ENCODE measurements at regions of chr7 and their contacts with region 1.

Region 1: GRCh38 chr7:150420987-150421674 is 29.3 kb upstream of the GIMAP8 start:
- DNase-seq: peak; percentile 83 to 93 (median 87)
- ATAC-seq: peak; percentile 94 to 96
- H3K4me3 ChIP-seq: no peak overlapping the region
- H3K27ac ChIP-seq: no peak overlapping the region
- H3K4me1 ChIP-seq: no peaks in the 10 kb centered on the region
- H3K27me3 ChIP-seq: no peaks in the 10 kb centered on the region

Region 2: DNA sequence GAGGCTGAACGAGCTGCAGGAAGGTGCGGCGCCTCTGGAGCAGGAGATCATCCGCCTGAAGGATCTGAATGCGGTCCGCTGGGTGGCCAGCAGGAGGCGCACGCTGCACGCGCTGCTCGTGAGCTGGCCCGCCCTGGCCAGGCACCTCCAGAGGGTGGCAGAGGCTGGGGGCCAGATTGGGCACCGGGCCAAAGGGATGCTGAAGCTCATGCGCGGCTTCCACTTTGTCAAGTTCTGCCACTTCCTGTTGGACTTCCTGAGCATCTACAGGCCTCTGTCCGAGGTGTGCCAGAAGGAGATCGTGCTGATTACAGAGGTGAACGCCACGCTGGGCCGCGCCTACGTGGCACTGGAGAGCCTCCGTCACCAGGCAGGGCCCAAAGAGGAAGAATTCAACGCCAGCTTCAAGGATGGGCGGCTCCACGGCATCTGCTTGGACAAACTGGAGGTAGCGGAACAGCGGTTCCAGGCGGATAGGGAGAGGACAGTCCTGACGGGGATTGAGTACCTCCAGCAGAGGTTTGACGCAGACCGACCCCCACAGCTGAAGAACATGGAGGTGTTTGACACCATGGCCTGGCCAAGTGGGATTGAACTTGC is 559.6 kb before region 1 on chr7:
- intact Hi-C with region 1: no loop called
- DNase-seq: peak in 2 of 3 donors; percentile 63 to 65
- ATAC-seq: no peak
- H3K4me3 ChIP-seq: no peak overlapping the region
- H3K27ac ChIP-seq: no peak overlapping the region
- H3K4me1 ChIP-seq: no peaks in the 10 kb centered on the region
- H3K27me3 ChIP-seq: no peaks in the 10 kb centered on the region

Region 3: DNA sequence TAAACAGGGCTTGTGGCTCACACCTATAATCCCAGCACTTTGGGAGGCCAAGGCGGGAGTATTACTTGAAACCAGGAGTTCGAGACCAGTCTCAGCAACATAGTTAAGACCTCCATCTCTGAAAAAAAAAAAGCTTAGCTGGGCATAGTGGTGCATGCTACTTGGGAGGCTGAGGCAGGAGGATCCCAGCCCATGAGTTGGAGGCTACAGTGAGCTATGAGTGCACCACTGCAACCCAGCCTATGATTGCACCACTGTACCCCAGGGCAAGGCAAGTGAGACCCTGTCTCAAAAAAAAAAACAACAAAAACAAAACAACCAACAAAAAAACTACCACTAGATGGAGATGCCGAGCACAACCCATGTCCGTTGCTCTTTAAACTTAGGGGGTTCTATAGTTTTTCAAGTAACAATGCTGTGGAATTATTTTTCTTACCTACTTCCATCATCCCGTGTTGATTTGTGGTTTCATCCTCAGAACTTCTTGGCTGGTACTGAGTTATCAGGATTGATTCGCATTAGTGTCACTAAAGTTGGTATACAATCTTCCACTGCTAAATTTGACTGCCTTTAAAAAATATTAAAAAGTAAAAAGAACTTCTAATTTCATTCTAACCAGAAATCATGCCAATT is 64.8 kb before region 1 on chr7:
- intact Hi-C with region 1: loop called in 2 of 4 experiments (anchors 2 kb)
- DNase-seq: no peak
- ATAC-seq: no peak
- H3K4me3 ChIP-seq: no peak overlapping the region
- H3K27ac ChIP-seq: no peak overlapping the region
- H3K4me1 ChIP-seq: no peaks in the 10 kb centered on the region
- H3K27me3 ChIP-seq: no peaks in the 10 kb centered on the region

Measured in right cardiac atrium (tissue), 5 donors.